AG04450 (cell line): ENCODE measurements at regions of chr9 and their contacts with region 1.

Region 1: GRCh38 chr9:32378993-32379729 is 5.3 kb upstream of the ACO1 start:
- DNase-seq: peak; percentile 63
- H3K4me3 ChIP-seq: no peak overlapping the region; the same call in 1 of the 2 replicates
- H3K27ac ChIP-seq: no peak overlapping the region
- H3K27me3 ChIP-seq: no peaks in the 10 kb centered on the region
- CTCF ChIP-seq: peak; percentile 88

Region 2: DNA sequence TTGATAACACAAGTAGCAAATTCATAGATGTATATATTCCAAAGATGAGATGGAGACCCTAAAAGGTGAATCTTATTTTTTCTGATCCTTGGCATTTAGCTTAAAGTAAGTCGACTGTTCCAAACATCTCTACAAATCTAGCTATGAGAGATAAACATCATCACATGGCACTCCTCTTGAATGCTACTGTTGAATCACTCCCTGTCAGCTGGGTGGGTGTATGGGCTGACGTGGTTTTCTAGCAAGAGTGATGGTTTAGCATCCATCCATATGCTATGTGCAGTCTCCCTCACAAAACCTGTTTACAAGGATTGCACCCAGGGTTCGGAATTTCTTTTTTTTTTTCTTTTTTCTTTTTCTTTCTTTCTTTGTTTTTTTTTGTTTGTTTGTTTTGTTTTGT is 19.0 kb after region 1 on chr9:
- CTCF ChIA-PET with region 1: interaction called, 19 read pairs
- POLR2A ChIA-PET with region 1: interaction called, 9 read pairs
- DNase-seq: no peak
- H3K4me3 ChIP-seq: no peak overlapping the region
- H3K27ac ChIP-seq: no peak overlapping the region
- H3K27me3 ChIP-seq: no peaks in the 10 kb centered on the region
- CTCF ChIP-seq: no peak

Region 3: GRCh38 chr9:32431940-32432555 is 52.9 kb after region 1 on chr9:
- CTCF ChIA-PET with region 1: interaction called, 133 read pairs
- POLR2A ChIA-PET with region 1: interaction called, 6 read pairs
- DNase-seq: no peak
- H3K4me3 ChIP-seq: no peak overlapping the region
- H3K27ac ChIP-seq: no peak overlapping the region
- H3K27me3 ChIP-seq: no peaks in the 10 kb centered on the region
- CTCF ChIP-seq: peak; percentile 63

Region 4: DNA sequence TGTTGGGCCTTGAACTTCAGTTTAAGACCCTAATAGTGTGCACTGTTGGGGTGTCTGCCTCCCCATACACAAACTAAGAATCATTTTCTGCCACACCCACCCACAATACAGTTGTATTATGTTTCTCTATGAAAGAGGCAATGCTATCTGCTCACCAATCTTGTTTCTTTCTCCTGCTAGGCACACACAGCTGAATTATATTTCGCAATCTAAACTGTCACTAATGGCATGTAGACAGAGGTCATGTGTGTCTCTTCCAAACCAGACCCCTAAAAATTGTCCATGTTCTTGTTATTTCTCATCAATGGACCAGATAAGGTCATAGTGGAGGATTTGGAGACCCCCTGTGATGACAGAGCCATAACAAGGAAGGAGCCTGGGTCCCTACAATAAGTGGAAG is 89.6 kb after region 1 on chr9:
- CTCF ChIA-PET with region 1: interaction called, 14 read pairs
- POLR2A ChIA-PET with region 1: interaction called, 10 read pairs
- DNase-seq: no peak
- H3K4me3 ChIP-seq: no peak overlapping the region
- H3K27ac ChIP-seq: no peak overlapping the region
- H3K27me3 ChIP-seq: no peaks in the 10 kb centered on the region
- CTCF ChIP-seq: no peak

Region 5: GRCh38 chr9:32526041-32526706 is 147.0 kb after region 1 on chr9 and contains the start of gene RIGI:
- CTCF ChIA-PET with region 1: interaction called, 63 read pairs
- POLR2A ChIA-PET with region 1: no interaction called
- DNase-seq: peak; percentile 82
- H3K4me3 ChIP-seq: peak within 1 kb of the TSS; percentile 84
- H3K27ac ChIP-seq: peak within 1 kb of the TSS; percentile 73
- H3K27me3 ChIP-seq: no peaks in the 10 kb centered on the region
- CTCF ChIP-seq: peak; percentile 32
- polyA plus RNA-seq, gene RIGI: 8.4 and 11.1 TPM in 2 replicates

Region 6: DNA sequence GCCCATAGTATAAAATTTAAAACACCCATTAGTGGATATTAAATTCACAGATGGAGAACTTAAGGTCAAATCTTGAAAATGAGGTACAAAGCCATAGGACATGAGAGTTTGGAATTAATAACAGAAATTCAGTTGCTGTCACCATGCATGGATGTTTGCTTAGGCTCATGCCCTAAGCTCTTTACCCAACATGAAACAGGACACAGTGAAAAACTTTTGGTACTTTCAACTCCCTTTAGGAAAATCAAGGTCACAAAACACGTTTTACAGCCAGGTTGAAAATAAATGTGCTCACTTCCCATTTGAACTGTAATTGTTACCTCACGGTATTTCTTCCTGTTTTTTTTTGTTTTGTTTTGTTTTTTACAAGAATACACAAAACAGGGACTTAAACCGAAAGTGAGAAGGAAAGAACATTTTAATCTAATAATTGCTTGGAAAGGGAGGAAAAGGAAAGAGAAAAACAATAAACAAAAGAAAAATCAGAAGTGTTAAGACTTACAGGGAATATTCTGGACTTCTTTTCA is 179.3 kb after region 1 on chr9:
- CTCF ChIA-PET with region 1: interaction called, 106 read pairs
- POLR2A ChIA-PET with region 1: no interaction called
- DNase-seq: no peak
- H3K4me3 ChIP-seq: no peak overlapping the region
- H3K27ac ChIP-seq: no peak overlapping the region
- H3K27me3 ChIP-seq: no peaks in the 10 kb centered on the region
- CTCF ChIP-seq: no peak

Region 7: GRCh38 chr9:32954642-32955041 is 575.5 kb after region 1 on chr9:
- CTCF ChIA-PET with region 1: interaction called, 10 read pairs
- POLR2A ChIA-PET with region 1: no interaction called
- DNase-seq: no peak
- H3K4me3 ChIP-seq: no peak overlapping the region
- H3K27ac ChIP-seq: no peak overlapping the region
- H3K27me3 ChIP-seq: no peaks in the 10 kb centered on the region
- CTCF ChIP-seq: no peak